GM10248 (cell line): ENCODE measurements at regions of chr1 and their contacts with region 1.

Region 1: GRCh38 chr1:26399034-26399433 is 11.6 kb upstream of the LIN28A start:
- DNase-seq: no peak
- CTCF ChIP-seq: no peak

Region 2: DNA sequence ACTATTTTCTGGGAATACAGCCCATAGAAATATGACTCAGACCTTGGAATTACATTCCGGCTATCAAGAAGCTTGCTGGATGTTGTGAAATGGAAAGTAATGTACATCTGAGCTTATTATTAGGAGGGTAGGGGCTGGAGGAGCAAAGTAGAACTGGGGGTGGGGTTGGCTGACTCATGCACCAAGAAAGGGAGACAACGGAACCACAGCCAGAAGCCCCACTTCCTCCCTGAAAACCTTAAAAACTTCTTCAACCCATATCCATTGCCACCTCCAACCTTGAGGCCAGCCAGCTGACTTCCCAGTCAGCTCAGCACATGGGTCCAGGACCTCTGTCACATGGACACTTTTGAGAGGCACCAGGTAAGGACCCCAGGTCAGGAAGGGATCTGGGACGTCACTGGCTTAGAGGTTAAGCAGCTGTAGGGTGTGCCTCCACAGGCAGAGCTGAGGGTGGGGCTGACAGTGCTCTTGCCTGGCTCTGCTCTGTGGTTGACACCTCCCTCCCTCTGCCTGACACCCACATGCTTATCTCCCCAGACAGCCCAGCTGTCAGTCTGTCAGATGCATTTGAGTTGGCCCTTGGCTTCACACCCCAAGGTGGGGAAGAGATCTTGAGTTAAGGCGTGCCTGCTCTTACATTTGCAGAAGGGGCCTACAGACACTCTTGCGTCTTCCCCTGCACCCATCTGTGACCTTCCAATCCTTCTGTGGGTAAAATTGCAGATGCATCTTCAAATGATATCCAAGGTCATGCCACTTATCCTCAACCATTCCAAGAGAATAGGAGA is 20.8 kb before region 1 on chr1:
- CTCF ChIA-PET with region 1: interaction called, 13 read pairs
- POLR2A ChIA-PET with region 1: no interaction called
- DNase-seq: peak; percentile 86
- CTCF ChIP-seq: no peak

Region 3: GRCh38 chr1:26388791-26389445 is 10.1 kb before region 1 on chr1:
- CTCF ChIA-PET with region 1: no interaction called
- POLR2A ChIA-PET with region 1: no interaction called
- DNase-seq: no peak
- CTCF ChIP-seq: no peak